H1 (cell line): ENCODE measurements at regions of chr9 and their contacts with region 1.

Region 1: GRCh38 chr9:70406434-70406862 is 8.0 kb downstream of the KLF9 start:
- DNase-seq: no peak
- H3K4me3 ChIP-seq: no peak overlapping the region
- H3K27ac ChIP-seq: no peak overlapping the region
- H3K4me1 ChIP-seq: peaks cover 4 to 14% (median 6%) of the 10 kb centered on the region in 4 experiments; a peak in 4 of 7 replicates
- H3K27me3 ChIP-seq: peaks cover 2 to 13% (median 5%) of the 10 kb centered on the region in 4 experiments
- CTCF ChIP-seq: no peak
- EP300 ChIP-seq: no peak
- POLR2A ChIP-seq: no peak
- RAD21 ChIP-seq: peak in 1 of 2 experiments; percentile 14; a peak in 1 of 4 replicates

Region 2: GRCh38 chr9:70303268-70303667 is 103.2 kb before region 1 on chr9:
- CTCF ChIA-PET with region 1: no interaction called
- POLR2A ChIA-PET with region 1: no interaction called
- DNase-seq: no peak
- H3K4me3 ChIP-seq: no peak overlapping the region
- H3K27ac ChIP-seq: no peak overlapping the region
- H3K4me1 ChIP-seq: no peaks in the 10 kb centered on the region
- H3K27me3 ChIP-seq: no peaks in the 10 kb centered on the region
- CTCF ChIP-seq: no peak
- EP300 ChIP-seq: no peak
- POLR2A ChIP-seq: no peak
- RAD21 ChIP-seq: no peak

Region 3: GRCh38 chr9:70392189-70392588 is 14.3 kb before region 1 on chr9:
- CTCF ChIA-PET with region 1: interaction called, 18 read pairs
- POLR2A ChIA-PET with region 1: interaction called, 4 read pairs
- DNase-seq: no peak
- H3K4me3 ChIP-seq: no peak overlapping the region
- H3K27ac ChIP-seq: no peak overlapping the region
- H3K4me1 ChIP-seq: peaks cover 0 to 5% (median 0%) of the 10 kb centered on the region in 4 experiments; a peak in 2 of 7 replicates
- H3K27me3 ChIP-seq: no peaks in the 10 kb centered on the region
- CTCF ChIP-seq: no peak
- EP300 ChIP-seq: no peak
- POLR2A ChIP-seq: no peak
- RAD21 ChIP-seq: 0 out of 4 replicates have a peak, but pooled peaks of 1 of the 2 experiments have one; percentile 4

Region 4: DNA sequence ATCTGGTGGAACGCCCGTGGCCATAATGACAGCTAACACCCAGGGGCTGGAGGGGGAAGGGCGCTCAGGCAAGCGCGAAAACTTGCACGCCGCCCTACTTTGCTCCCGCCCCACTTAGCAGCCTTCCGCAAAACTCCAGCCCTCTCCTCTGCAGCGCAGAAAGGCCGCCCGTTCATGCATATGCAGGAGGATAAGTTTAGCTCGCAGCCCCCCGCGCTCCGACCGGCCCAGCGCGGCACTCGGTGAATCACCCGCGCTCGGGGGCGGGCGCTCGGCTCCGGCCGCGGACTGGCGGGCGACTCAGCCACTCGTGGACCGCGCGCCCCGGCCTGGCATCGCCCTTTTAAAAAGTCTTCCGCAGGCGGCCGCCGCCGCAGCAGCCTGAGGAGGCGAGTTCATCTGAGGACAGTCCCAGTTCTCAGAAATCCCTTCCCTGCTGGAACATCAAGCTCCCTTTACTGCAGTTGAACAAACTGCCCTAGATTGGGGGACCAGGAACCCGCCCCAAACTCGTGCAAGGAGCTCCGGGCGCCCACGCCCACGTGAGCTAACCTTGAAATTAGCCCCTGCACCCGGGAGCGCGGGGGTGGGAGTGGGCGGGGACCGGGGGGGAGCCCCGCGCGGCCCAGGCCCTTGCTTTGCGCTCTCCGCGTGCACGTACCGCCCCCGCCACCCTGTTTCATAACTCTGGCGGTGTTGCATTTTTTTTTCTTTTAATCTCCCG is 12.5 kb after region 1 on chr9:
- CTCF ChIA-PET with region 1: interaction called, 5 read pairs
- POLR2A ChIA-PET with region 1: interaction called, 28 read pairs
- DNase-seq: peak; percentile 56 to 86
- H3K4me3 ChIP-seq: peak overlapping the region; percentile 52 to 80 (median 66)
- H3K27ac ChIP-seq: peak overlapping the region; percentile 55; the same call in 1 of the 2 replicates
- H3K4me1 ChIP-seq: peaks cover 4 to 14% (median 6%) of the 10 kb centered on the region in 4 experiments; a peak in 6 of 7 replicates
- H3K27me3 ChIP-seq: peaks cover 0 to 11% (median 5%) of the 10 kb centered on the region in 4 experiments; a peak in 5 of 7 replicates
- CTCF ChIP-seq: no peak
- EP300 ChIP-seq: peak in 1 of 2 experiments; percentile 34; a peak in 1 of 3 replicates
- POLR2A ChIP-seq: peak in 1 of 2 experiments; percentile 31; a peak in 1 of 3 replicates
- RAD21 ChIP-seq: no peak; a peak in 1 of 4 replicates